ENCODE measurements at regions of chr1 and their contacts with region 1.

Region 1: DNA sequence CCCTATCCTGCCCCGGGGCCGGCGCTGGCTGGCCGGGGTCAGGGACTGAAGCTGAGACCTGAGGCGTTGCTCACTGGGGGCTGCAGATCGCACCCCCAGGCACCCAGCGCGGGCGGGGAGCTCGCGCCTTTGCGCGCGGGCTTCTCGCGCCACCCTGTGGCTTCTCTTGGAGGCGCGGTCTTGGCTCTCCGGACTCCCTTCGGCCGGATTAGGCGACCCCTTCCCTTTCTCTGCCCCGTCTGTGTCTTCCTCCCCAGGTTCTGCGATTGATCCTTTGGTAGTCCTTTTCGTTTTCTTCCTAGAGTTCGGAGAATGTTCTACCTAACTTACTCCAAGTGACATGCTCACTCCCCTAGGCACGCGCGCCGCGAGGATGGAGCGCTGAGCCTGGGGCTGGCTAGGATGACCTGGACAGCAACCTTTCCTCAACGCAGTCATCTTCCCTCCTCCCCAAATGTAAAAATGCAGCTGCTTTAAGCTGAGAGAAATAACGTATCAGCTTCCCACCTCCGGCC is 495 bp upstream of the NTRK1 start:
- DNase-seq: peak; percentile 48 to 70
- ATAC-seq: peak; percentile 73 to 87
- H3K4me3 ChIP-seq: peak overlapping the region; percentile 46
- H3K27ac ChIP-seq: peak overlapping the region in 1 of 2 experiments; percentile 59; a peak in 3 of 6 replicates
- H3K4me1 ChIP-seq: peaks cover 8% of the 10 kb centered on the region; the same call in 1 of the 3 replicates
- CTCF ChIP-seq: peak; percentile 96
- EP300 ChIP-seq: no peak
- POLR2A ChIP-seq: no peak
- RAD21 ChIP-seq: peak; percentile 79 to 92

Region 2: GRCh38 chr1:156625436-156626078 is 234.6 kb before region 1 on chr1:
- CTCF ChIA-PET with region 1: interaction called, 10 read pairs
- POLR2A ChIA-PET with region 1: no interaction called
- DNase-seq: peak in 1 of 2 experiments; percentile 61
- ATAC-seq: peak; percentile 27 to 64
- H3K4me3 ChIP-seq: peak overlapping the region; percentile 49
- H3K27ac ChIP-seq: peak overlapping the region; percentile 3 to 76; a peak in 3 of 6 replicates
- H3K4me1 ChIP-seq: peaks cover 12% of the 10 kb centered on the region
- CTCF ChIP-seq: peak; percentile 80
- EP300 ChIP-seq: no peak
- POLR2A ChIP-seq: no peak
- RAD21 ChIP-seq: peak; percentile 65 to 72

Region 3: DNA sequence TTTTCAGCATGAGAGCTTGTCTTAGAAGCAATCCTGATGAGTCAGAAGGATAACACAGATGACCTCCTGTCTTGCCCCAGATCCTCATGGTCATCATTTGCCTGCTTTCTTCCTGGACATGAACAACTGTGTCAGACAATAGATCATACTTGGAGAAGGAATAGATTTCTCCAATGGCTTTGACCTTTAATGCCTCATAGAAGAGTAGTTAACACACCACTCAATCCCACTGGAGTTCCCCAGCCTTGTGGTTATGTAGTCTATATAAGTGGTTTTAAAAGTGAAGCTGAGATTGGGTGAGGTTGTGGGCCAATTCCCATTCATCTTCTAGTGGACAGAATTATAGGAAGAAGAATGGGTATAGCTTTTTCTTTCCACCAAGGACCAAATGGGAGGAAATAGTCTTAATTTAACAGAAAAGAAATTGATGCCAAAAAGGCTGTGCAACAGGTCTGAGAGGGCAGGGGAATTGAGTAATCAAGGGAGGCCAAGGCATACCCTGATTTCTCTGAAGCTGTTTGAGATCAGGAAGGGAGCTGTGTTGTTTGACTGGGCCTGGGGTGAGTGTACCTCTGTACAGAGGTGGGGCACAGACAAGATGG is 78.5 kb before region 1 on chr1:
- CTCF ChIA-PET with region 1: interaction called, 18 read pairs
- POLR2A ChIA-PET with region 1: no interaction called
- DNase-seq: peak in 1 of 2 experiments; percentile 14
- ATAC-seq: no peak
- H3K4me3 ChIP-seq: no peak overlapping the region
- H3K27ac ChIP-seq: no peak overlapping the region
- H3K4me1 ChIP-seq: peaks cover 8% of the 10 kb centered on the region; the same call in 2 of the 3 replicates
- CTCF ChIP-seq: no peak
- EP300 ChIP-seq: no peak
- POLR2A ChIP-seq: no peak
- RAD21 ChIP-seq: no peak

Region 4: DNA sequence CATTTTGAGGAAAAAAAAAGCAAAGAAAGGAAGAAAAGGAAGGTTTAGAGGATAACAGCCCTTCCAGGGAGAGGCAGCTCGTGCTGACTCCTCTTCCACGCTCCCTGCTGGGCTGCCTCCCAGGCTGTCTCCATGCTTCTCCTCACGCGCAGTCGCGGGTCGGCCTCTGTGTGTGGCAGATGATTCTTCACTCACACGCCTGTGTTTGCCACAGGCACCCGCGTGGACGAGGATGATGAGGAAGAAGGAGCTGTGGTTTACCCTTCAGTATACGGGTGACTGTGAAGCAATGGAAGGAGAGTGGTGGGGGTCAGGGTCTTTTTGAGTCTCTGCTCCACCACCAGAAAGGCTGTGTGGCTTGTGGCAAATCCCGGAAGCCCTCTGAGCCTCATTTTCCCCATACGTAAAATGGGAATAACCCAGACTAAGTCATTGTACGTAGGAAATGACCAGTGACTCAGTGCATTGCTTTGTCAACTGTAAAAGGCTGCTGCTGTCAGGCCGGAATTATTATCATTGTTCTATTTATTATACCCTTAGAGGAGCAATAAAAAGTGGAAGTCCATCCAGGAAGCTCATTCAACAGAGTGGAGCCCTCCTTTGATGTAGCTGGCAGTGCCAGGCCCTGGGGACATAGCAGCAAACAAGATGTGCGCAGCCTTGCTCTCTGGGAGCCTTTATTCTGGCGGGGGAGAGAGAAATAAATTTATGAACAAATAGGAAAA is 31.6 kb before region 1 on chr1:
- CTCF ChIA-PET with region 1: interaction called, 32 read pairs
- POLR2A ChIA-PET with region 1: no interaction called
- DNase-seq: no peak
- ATAC-seq: no peak
- H3K4me3 ChIP-seq: no peak overlapping the region
- H3K27ac ChIP-seq: no peak overlapping the region
- H3K4me1 ChIP-seq: no peaks in the 10 kb centered on the region
- CTCF ChIP-seq: no peak
- EP300 ChIP-seq: no peak
- POLR2A ChIP-seq: no peak
- RAD21 ChIP-seq: no peak

Region 5: DNA sequence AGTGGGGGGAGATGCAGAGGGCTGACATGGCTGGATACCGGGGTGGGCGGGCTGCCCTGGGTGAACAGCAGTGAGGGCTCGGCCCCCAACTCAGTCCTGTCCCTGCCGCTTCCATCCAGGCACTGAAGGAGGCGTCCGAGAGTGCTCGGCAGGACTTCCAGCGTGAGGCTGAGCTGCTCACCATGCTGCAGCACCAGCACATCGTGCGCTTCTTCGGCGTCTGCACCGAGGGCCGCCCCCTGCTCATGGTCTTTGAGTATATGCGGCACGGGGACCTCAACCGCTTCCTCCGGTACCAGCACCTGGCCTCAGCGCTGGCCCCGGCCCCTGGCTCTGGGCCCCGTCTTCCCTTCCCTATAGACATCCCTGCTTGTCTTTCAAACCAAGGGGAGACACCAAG is 16.1 kb after region 1 on chr1:
- CTCF ChIA-PET with region 1: interaction called, 178 read pairs
- POLR2A ChIA-PET with region 1: no interaction called
- DNase-seq: no peak
- ATAC-seq: peak in 1 of 2 experiments; percentile 52; a peak in 3 of 6 replicates
- H3K4me3 ChIP-seq: no peak overlapping the region
- H3K27ac ChIP-seq: no peak overlapping the region
- H3K4me1 ChIP-seq: peaks cover under 1% of the 10 kb centered on the region; the same call in 1 of the 3 replicates
- CTCF ChIP-seq: no peak
- EP300 ChIP-seq: no peak
- POLR2A ChIP-seq: no peak
- RAD21 ChIP-seq: no peak

Region 6: DNA sequence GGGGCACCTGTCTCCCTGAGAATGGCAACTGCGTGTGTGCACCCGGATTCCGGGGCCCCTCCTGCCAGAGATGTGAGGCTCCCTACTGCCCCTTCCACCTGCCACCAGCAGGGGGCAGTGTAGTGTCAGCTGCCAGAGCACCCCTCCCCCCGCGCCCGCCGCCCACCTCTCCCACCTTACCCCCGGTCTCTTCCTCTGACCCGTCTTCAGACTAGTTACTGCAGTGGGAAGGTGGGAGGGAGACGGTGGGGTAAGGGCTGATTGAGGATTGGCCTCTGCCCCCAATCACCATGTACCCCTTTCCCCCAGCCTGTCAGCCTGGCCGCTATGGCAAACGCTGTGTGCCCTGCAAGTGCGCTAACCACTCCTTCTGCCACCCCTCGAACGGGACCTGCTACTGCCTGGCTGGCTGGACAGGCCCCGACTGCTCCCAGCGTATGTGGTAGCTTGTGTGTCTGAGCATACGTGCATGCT is 50.2 kb after region 1 on chr1:
- CTCF ChIA-PET with region 1: interaction called, 24 read pairs
- POLR2A ChIA-PET with region 1: no interaction called
- DNase-seq: peak; percentile 43 to 66
- ATAC-seq: peak; percentile 52 to 78; a peak in 4 of 6 replicates
- H3K4me3 ChIP-seq: no peak overlapping the region
- H3K27ac ChIP-seq: peak overlapping the region in 1 of 2 experiments; percentile 52; a peak in 2 of 6 replicates
- H3K4me1 ChIP-seq: peaks cover 20% of the 10 kb centered on the region
- CTCF ChIP-seq: peak; percentile 83
- EP300 ChIP-seq: no peak
- POLR2A ChIP-seq: no peak
- RAD21 ChIP-seq: peak; percentile 37 to 50; a peak in 4 of 5 replicates

Region 7: DNA sequence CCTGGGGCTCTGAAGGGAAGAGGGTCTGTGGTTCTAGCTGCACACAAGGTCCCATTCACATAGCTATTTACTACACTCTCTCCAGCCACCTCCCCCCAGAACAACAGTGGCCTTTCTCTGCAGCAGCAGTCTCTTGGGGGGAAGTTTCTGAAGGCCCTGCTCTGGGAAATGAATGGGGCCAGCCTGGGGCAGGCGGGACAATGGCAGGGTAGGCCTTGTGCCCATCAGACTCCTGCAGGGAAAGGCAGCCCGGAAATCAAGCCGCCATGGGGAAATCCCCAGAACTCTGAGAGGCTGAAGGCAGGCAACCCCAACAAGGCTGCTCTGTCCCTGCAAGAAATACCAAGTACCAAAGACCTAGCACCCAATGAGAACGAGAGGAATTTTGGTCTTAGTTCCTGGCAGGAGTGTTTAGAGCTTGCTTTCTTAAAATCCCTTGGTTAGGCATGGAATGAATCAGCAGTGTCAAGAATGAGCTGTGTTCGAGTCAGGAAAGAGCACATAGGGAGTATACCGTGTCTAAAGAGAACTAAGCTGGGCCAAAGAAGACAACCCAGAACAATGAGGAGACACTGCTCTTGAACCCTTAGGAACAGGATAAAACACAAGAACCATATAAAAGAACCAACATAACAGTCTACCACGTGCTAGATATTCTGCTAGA is 174.1 kb after region 1 on chr1:
- CTCF ChIA-PET with region 1: no interaction called
- POLR2A ChIA-PET with region 1: no interaction called
- DNase-seq: no peak
- ATAC-seq: no peak; a peak in 1 of 6 replicates
- H3K4me3 ChIP-seq: no peak overlapping the region
- H3K27ac ChIP-seq: no peak overlapping the region
- H3K4me1 ChIP-seq: no peaks in the 10 kb centered on the region
- CTCF ChIP-seq: no peak
- EP300 ChIP-seq: no peak
- POLR2A ChIP-seq: no peak
- RAD21 ChIP-seq: no peak